Dorsolateral prefrontal cortex (tissue), 120 donors: ENCODE measurements at regions of chr3 and their contacts with region 1.

Region 1: GRCh38 chr3:2354702-2355101 is 256.0 kb downstream of the CNTN4 start:
- DNase-seq: peak in 1 of 10 donors; percentile 20
- H3K4me3 ChIP-seq: no peak overlapping the region
- H3K27ac ChIP-seq: no peak overlapping the region
- H3K27me3 ChIP-seq: no peaks in the 10 kb centered on the region
- CTCF ChIP-seq: no peak

Region 2: GRCh38 chr3:2137651-2138050 is 217.1 kb before region 1 on chr3:
- intact Hi-C with region 1: no loop called
- DNase-seq: no peak
- H3K4me3 ChIP-seq: no peak overlapping the region
- H3K27ac ChIP-seq: no peak overlapping the region
- H3K27me3 ChIP-seq: no peaks in the 10 kb centered on the region
- CTCF ChIP-seq: no peak

Region 3: DNA sequence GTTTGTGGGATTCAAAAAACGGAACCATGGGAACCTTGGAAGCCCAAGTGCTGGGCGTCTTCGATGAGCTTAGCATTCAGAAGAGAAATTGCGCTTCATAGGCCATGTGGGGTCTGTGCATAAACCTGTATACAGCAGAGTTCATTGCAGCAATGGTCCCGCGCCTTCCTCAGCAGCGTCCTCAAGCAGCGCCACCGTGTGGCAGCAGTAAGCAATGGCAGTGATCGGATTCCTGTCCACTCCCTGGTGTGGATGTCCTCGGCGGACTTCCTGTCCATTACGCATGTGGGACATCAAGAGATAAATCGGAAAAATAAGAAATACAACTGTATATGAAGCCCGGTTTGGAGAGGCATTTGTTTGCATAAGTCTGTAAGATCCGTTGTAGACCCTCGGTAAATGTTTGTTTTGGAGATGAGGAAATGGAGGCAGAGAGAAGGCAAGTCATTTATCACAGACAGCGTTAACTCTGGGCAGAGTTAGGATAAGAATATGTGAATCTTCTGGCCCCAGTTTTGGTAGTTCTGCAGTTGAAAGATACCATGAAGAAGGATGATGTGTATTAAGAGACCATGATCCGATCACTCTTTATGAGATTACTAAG is 198.4 kb before region 1 on chr3:
- intact Hi-C with region 1: loop called in 1 of 2 experiments (anchors 10 kb)
- DNase-seq: no peak
- H3K4me3 ChIP-seq: no peak overlapping the region
- H3K27ac ChIP-seq: no peak overlapping the region
- H3K27me3 ChIP-seq: peaks cover 0 to 3% (median 0%) of the 10 kb centered on the region in 45 donors
- CTCF ChIP-seq: peak in 52 of 56 donors; percentile 22 to 62 (median 44)